HepG2 (cell line): ENCODE measurements at regions of chr10 and their contacts with region 1.

Region 1: DNA sequence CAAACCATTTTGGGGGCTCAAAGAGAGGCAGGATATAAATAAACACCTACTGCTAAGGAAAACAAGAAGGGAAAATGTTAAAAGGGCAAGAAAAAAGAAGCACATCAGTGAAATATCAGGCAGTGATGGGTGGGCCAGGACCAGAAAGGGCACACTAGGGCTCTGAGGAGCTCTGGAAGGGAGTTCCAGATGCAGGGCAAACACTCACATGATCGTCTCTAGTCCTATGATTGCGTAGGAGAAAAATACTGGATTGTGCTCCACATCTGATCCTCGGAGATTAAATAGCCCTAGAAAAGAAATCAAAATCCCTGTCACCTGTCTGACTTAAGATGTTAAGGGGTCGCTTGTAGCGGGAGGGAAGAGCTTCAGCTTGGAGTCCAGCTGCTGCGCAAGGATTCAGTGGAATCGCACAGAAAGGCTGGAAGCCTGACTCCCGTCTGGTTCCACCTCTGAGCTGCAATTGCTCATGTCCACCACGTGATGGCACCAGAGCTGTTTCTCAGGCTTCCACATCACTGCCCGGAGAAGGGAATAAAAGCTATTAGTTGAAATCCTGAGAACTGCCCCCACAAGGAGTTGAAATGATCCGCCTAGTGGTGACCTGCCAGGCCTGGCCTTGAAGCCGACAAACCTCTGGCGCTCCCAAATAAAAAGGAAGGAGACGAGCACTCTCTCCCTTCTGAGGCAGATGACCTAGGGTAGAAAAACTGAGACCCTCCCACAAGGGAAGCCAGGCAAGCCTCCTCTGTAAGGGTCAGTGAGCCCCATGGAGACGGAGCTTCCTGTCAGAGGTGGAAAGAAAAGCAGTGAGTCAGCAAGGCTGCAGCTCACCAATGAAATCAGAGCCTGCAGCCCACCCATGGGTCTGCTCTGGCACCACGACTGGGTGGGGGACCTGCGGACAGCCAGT is 39.2 kb downstream of the XPNPEP1 start:
- DNase-seq: peak; percentile 81
- ATAC-seq: peak; percentile 93
- H3K4me3 ChIP-seq: no peak overlapping the region
- H3K27ac ChIP-seq: no peak overlapping the region
- H3K4me1 ChIP-seq: peaks cover 7% of the 10 kb centered on the region; the same call in 1 of the 2 replicates
- H3K27me3 ChIP-seq: no peaks in the 10 kb centered on the region
- CTCF ChIP-seq: peak; percentile 93
- EP300 ChIP-seq: no peak
- POLR2A ChIP-seq: no peak
- RAD21 ChIP-seq: peak; percentile 95

Region 2: DNA sequence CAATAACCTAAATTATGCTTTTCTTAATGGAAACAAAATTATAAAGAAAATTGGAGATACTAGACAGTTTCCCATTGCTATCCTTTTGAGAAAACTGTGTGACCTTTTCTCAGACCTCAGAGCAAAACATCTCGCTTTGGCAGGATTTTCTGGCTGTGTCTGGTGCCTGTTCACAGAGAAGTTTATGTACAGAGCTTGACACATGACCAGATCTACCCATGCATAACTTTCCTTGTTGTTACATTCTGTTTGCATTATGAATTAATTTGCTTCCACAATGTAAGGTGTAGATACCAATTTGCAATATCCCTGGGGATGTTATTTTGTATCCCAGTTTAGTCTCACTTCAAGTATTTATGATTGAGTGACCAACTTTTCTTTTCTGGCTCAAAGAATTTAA is 525.8 kb before region 1 on chr10:
- CTCF ChIA-PET with region 1: no interaction called
- POLR2A ChIA-PET with region 1: no interaction called
- in situ Hi-C with region 1: no loop called
- intact Hi-C with region 1: no loop called
- DNase-seq: no peak
- ATAC-seq: no peak
- H3K4me3 ChIP-seq: no peak overlapping the region
- H3K27ac ChIP-seq: no peak overlapping the region
- H3K4me1 ChIP-seq: no peaks in the 10 kb centered on the region
- H3K27me3 ChIP-seq: no peaks in the 10 kb centered on the region
- CTCF ChIP-seq: no peak
- EP300 ChIP-seq: no peak
- POLR2A ChIP-seq: no peak
- RAD21 ChIP-seq: no peak

Region 3: DNA sequence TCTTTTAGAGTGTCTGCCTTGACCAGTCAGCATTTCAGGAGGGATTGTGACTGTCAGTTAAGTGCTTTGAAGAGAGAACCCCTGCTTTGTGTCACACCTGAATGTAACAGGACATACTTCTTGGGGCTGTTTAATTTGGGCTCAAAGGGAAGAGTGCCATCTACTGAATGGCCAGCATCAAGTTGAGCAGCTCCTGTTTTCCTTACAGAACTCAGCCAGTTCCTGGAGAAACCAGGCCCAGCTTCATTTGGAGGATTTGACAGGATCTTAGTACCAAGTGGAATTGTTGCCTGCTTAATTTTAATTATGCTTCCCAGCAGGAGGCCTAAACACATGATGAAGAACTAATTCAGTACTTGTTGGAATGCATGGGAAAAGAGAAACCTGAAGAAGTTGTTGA is 131.9 kb after region 1 on chr10:
- CTCF ChIA-PET with region 1: interaction called, 5 read pairs
- POLR2A ChIA-PET with region 1: no interaction called
- in situ Hi-C with region 1: loop called (anchors 25 kb)
- intact Hi-C with region 1: loop called (anchors 1 kb)
- DNase-seq: peak; percentile 44
- ATAC-seq: peak; percentile 83
- H3K4me3 ChIP-seq: no peak overlapping the region
- H3K27ac ChIP-seq: no peak overlapping the region
- H3K4me1 ChIP-seq: peaks cover 33% of the 10 kb centered on the region
- H3K27me3 ChIP-seq: no peaks in the 10 kb centered on the region
- CTCF ChIP-seq: peak; percentile 72
- EP300 ChIP-seq: no peak
- POLR2A ChIP-seq: no peak
- RAD21 ChIP-seq: 0 out of 2 replicates have a peak, but pooled peaks have one; percentile 28